WTC11 (cell line): ENCODE measurements at regions of chr21 and their contacts with region 1.

Region 1: DNA sequence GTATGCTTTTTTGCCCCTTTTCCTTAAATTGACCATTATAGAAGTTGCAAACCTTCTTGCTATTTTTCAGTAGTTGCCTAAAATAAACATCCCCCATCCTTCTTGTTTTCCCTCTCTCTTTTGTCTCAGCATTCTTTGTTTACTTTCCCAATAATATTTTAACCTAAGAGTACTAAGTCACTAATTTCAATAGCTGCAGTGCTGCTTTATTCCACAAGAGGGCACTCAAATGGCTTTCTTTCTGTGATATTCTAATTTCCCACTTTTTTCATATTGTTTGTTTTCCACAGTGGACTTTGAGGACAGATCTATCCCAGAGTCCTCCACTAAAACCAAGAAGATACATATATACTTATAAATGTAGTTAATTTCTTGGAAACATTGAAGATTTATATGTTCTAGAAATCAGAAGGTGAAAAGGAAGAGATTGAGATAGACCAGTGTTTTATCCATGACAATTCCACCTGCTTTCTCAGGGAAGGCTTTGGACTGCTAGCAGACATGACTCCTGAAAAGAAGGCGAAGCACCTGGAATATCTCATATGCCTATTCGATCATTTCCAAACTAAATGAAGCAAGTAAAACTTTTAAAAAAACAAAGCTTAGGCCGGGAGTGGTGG is 104.8 kb upstream of the GRIK1 start:
- DNase-seq: no peak
- ATAC-seq: no peak
- H3K4me3 Mint-ChIP-seq: no peak overlapping the region
- H3K27ac Mint-ChIP-seq: no peak overlapping the region
- H3K4me1 Mint-ChIP-seq: no peaks in the 10 kb centered on the region; the same call in 1 of the 2 replicates
- H3K27me3 Mint-ChIP-seq: no peaks in the 10 kb centered on the region; the same call in 1 of the 2 replicates
- CTCF ChIP-seq: peak; percentile 39; the same call in 1 of the 2 replicates

Region 2: DNA sequence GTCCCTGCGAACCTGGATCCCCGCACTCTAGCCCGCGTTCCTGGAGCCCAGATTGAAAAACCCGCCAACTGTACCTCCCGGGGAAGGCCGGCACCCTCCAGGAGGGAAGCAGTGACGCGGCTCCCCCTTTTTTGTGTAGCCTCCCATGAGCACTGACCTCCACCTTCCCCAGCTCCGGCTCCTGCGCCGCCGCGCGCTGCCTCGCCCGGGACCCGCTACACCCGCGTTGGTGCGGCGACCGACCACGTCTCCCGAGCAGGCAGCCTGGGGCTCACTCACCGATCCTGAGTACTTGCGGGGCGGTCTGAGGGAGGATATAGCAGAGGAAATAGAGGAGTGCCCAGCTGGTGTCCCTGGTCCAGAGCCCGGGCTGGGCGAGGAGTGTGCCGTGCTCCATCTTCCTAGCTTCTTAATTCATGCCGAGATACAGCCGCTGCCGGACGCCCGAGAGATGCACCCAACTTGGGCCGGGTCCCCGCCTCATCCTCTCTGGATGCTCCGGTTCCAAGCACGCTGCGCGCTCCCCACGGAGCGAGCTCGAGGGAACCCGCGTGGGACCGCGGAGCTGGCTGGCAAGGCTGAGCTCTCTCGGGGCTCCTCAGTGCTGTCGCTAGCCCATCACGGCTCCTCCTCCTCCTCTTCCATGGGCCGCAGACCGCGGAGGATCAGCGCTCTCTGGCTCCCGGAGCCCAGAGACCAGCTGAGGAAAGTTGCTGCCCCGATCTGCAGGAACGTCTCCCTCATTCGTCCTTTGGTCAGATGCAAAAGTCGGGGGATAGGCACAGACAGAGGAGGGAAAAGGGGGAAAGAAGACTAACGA is 105.2 kb before region 1 on chr21:
- CTCF ChIA-PET with region 1: interaction called, 13 read pairs
- POLR2A ChIA-PET with region 1: no interaction called
- DNase-seq: peak; percentile 53
- ATAC-seq: peak; percentile 71
- H3K4me3 Mint-ChIP-seq: peak overlapping the region; percentile 93
- H3K27ac Mint-ChIP-seq: no peak overlapping the region
- H3K4me1 Mint-ChIP-seq: peaks cover 8% of the 10 kb centered on the region
- H3K27me3 Mint-ChIP-seq: peaks cover 63% of the 10 kb centered on the region
- CTCF ChIP-seq: no peak

Region 3: DNA sequence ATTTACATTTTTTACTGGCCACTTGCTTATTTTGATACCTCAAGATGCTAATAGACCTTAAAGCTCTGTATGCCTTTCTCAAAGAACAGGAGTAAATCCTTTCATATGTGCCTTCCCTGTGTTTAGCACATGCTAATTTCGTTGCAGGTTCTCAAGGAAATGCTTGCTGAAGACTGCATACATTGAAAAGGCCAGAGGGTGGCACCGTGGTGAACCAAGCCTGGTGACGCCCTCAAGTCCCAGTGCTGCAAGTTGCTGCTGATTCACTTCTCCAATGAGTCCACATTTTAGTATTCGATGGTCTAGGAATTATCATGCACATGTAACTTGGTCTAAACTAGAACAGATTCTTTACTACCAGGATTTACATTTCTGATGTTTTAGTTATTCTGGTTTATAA is 27.9 kb after region 1 on chr21:
- CTCF ChIA-PET with region 1: interaction called, 11 read pairs
- POLR2A ChIA-PET with region 1: no interaction called
- DNase-seq: peak; percentile 59
- ATAC-seq: peak; percentile 100
- H3K4me3 Mint-ChIP-seq: no peak overlapping the region
- H3K27ac Mint-ChIP-seq: peak overlapping the region; percentile 12; the same call in 1 of the 2 replicates
- H3K4me1 Mint-ChIP-seq: peaks cover 26% of the 10 kb centered on the region
- H3K27me3 Mint-ChIP-seq: no peaks in the 10 kb centered on the region
- CTCF ChIP-seq: no peak; the same call in 1 of the 2 replicates

Region 4: DNA sequence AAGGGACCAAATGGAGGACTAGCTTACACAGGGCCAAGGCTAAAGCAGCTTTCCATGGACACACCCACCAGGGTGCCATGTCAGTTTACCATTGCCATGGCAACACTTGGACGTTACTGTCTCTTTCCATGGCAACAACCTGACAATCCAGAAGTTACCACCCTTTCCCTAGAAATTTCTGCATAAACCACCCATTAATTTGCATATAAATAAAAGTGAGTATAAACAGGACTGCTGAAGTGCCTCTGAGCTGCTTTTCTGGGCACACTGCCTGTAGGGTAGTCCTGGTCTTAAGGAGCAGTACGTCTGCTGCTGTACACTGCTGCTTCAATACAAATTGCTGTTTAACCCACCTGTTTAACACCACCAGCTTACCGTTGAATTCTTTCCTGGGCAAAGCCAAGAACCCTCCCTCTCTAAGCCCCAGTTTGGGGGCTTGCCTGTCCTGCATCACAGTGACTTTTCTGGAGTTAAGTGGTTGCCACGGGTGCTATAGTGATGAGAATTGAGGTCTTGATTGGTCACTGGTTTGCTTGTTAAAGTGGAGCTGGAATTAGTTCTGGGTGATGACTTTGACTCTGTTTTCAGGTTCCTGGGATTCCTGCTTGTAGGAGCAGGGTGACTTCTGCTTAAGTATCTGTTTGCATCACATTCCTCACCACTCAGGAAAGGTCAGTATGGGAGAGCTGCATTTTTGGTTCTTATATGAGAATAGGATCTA is 38.8 kb after region 1 on chr21:
- CTCF ChIA-PET with region 1: interaction called, 14 read pairs
- POLR2A ChIA-PET with region 1: no interaction called
- DNase-seq: peak; percentile 71
- ATAC-seq: peak; percentile 88
- H3K4me3 Mint-ChIP-seq: peak overlapping the region; percentile 14
- H3K27ac Mint-ChIP-seq: peak overlapping the region; percentile 90
- H3K4me1 Mint-ChIP-seq: peaks cover 19% of the 10 kb centered on the region
- H3K27me3 Mint-ChIP-seq: no peaks in the 10 kb centered on the region
- CTCF ChIP-seq: no peak

Region 5: DNA sequence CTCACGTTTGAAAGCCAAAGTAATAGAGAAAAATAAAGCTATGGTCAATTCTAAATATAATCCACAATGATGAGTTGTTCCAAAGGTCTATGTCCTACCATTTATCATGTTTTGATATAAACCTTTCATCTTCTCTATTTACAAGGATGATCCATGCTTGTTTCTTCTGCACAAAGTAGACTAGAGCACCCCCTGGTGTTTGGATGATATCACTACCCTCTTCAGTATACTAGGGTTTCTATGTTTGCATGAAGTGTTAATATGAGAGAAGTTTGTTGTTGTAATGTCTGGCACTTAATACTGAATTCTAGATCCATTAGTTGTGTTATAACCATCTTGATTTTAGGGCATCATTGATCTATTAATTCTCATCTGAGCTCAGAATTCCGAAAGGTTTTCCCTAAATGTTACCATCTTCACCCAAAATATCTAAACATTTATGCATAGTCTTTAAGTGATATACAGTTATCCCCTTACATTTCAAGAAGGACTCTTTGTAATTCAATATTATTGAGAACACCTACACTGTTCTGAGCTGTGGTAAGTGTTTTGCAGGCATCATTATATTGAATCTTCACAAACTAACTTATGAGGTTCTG is 150.2 kb after region 1 on chr21:
- CTCF ChIA-PET with region 1: interaction called, 11 read pairs
- POLR2A ChIA-PET with region 1: no interaction called
- DNase-seq: no peak
- ATAC-seq: peak; percentile 85
- H3K4me3 Mint-ChIP-seq: no peak overlapping the region
- H3K27ac Mint-ChIP-seq: no peak overlapping the region
- H3K4me1 Mint-ChIP-seq: no peaks in the 10 kb centered on the region
- H3K27me3 Mint-ChIP-seq: no peaks in the 10 kb centered on the region
- CTCF ChIP-seq: peak; percentile 58